ENCODE measurements at regions of chr10 and their contacts with region 1.

Region 1: GRCh38 chr10:86899670-86900276 is 57.6 kb downstream of the MMRN2 start:
- DNase-seq: peak; percentile 45 to 79 (median 57)
- H3K4me3 ChIP-seq: no peak overlapping the region
- H3K27ac ChIP-seq: no peak overlapping the region
- H3K4me1 ChIP-seq: peaks cover 6% of the 10 kb centered on the region
- H3K27me3 ChIP-seq: no peaks in the 10 kb centered on the region
- CTCF ChIP-seq: peak; percentile 35 to 82 (median 81)
- EP300 ChIP-seq: no peak
- POLR2A ChIP-seq: no peak

Region 2: DNA sequence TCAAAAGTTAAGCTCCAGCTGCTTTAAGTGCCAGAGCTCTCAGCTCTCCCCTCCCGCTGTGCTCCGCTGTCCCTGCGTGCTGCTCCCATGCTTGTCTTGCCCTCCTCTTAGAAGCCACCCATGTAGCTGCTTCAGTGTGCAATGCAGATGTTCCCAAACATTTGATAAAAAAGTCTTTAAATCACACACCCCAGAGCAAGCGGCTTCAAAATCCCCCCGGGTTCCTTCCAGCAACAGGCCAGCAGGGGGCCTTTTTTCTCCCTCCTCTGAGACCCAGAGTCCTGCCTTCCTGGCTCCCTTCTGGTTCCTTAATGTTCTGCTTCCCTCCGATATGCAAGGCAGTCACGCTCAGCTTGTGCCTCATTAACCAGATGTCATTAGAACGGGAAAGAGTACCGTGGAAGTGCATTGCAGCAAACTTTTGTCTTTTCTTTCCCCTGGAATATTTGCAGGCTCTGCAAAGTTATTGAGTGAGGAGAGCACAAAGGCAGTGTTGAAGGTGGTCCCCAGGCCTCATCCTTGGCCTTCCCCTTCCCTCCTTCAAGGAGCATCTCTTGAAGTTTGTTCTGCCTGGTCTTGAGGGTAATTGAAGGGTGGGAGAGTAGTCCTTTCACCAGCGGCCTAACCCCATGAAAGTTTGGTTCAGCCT is 205.9 kb before region 1 on chr10:
- intact Hi-C with region 1: loop called in 1 of 4 experiments (anchors 5 kb)
- DNase-seq: peak; percentile 64 to 88 (median 75)
- H3K4me3 ChIP-seq: no peak overlapping the region
- H3K27ac ChIP-seq: peak overlapping the region in 1 of 2 donors; percentile 32
- H3K4me1 ChIP-seq: peaks cover 9% of the 10 kb centered on the region
- H3K27me3 ChIP-seq: no peaks in the 10 kb centered on the region
- CTCF ChIP-seq: peak; percentile 58 to 67 (median 59)
- EP300 ChIP-seq: no peak
- POLR2A ChIP-seq: no peak